ENCODE measurements at regions of chr5 and their contacts with region 1.

Region 1: GRCh38 chr5:151115274-151115905 is 34.6 kb upstream of the TNIP1 start:
- DNase-seq: peak; percentile 81
- ATAC-seq: peak; percentile 93
- H3K4me3 Mint-ChIP-seq: no peak overlapping the region
- H3K27ac Mint-ChIP-seq: no peak overlapping the region
- H3K4me1 Mint-ChIP-seq: peaks cover 6% of the 10 kb centered on the region
- H3K27me3 Mint-ChIP-seq: no peaks in the 10 kb centered on the region
- CTCF ChIP-seq: peak; percentile 97

Region 2: GRCh38 chr5:151020304-151021110 is 94.9 kb before region 1 on chr5 and contains the start of gene GPX3:
- CTCF ChIA-PET with region 1: interaction called, 16 read pairs
- POLR2A ChIA-PET with region 1: interaction called, 3 read pairs
- intact Hi-C with region 1: no loop called
- DNase-seq: peak; percentile 52
- ATAC-seq: peak; percentile 70
- H3K4me3 Mint-ChIP-seq: peak within 1 kb of the TSS; percentile 48
- H3K27ac Mint-ChIP-seq: no peak within 1 kb of the TSS
- H3K4me1 Mint-ChIP-seq: peaks cover 14% of the 10 kb centered on the region
- H3K27me3 Mint-ChIP-seq: peaks cover 7% of the 10 kb centered on the region
- CTCF ChIP-seq: no peak
- total RNA-seq, gene GPX3: not detected

Region 3: DNA sequence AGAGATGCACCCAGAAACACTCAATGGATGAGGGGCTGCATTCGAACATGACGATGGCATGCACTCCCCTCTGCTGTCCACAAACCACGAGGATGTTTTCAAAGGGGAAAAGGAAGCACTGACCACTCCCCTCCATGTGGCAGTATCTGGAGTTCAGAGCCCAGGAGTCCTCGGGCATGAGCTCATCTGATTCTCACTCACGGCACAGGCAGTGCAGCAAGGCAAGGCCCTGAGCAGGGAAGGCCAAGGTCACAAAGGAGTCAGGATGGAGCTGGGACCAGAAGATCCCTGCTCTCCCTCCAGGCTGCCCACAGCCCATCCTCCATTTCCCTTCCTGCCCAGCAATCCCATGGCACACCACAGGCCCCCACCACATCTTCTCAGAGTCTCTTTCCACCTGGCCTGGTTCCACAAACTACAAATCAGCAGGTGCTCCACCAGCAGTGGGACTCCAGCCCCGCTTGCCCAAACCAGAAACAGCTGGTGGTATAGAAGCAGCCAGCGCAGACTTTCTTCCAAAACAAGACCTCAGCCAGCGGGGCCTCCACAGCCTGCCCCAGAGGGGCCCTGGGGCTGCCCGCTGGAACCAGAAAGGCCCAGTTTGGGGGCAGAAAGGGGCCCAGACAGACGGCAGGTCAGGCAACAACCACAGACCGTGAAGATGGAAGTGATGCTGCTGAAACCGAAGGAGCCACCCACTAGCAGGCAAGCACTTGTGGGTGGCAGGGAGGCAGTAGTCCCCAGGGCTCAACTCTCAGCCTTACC is 46.8 kb before region 1 on chr5:
- CTCF ChIA-PET with region 1: interaction called, 27 read pairs
- POLR2A ChIA-PET with region 1: interaction called, 3 read pairs
- intact Hi-C with region 1: loop called (anchors 5 kb)
- DNase-seq: peak; percentile 81
- ATAC-seq: peak; percentile 80
- H3K4me3 Mint-ChIP-seq: peak overlapping the region; percentile 35
- H3K27ac Mint-ChIP-seq: peak overlapping the region; percentile 85
- H3K4me1 Mint-ChIP-seq: peaks cover 95% of the 10 kb centered on the region
- H3K27me3 Mint-ChIP-seq: no peaks in the 10 kb centered on the region
- CTCF ChIP-seq: no peak

Region 4: GRCh38 chr5:151093476-151093889 is 21.9 kb before region 1 on chr5:
- CTCF ChIA-PET with region 1: interaction called, 59 read pairs
- POLR2A ChIA-PET with region 1: interaction called, 9 read pairs
- intact Hi-C with region 1: no loop called
- DNase-seq: no peak
- ATAC-seq: peak; percentile 15
- H3K4me3 Mint-ChIP-seq: peak overlapping the region; percentile 61
- H3K27ac Mint-ChIP-seq: peak overlapping the region; percentile 93
- H3K4me1 Mint-ChIP-seq: peaks cover 68% of the 10 kb centered on the region
- H3K27me3 Mint-ChIP-seq: peaks cover 4% of the 10 kb centered on the region
- CTCF ChIP-seq: no peak

Region 5: GRCh38 chr5:151141535-151141934 is 26.1 kb after region 1 on chr5:
- CTCF ChIA-PET with region 1: interaction called, 28 read pairs
- POLR2A ChIA-PET with region 1: interaction called, 3 read pairs
- intact Hi-C with region 1: no loop called
- DNase-seq: peak; percentile 90
- ATAC-seq: peak; percentile 91
- H3K4me3 Mint-ChIP-seq: peak overlapping the region; percentile 73
- H3K27ac Mint-ChIP-seq: peak overlapping the region; percentile 86
- H3K4me1 Mint-ChIP-seq: peaks cover 88% of the 10 kb centered on the region
- H3K27me3 Mint-ChIP-seq: no peaks in the 10 kb centered on the region
- CTCF ChIP-seq: no peak

Region 6: DNA sequence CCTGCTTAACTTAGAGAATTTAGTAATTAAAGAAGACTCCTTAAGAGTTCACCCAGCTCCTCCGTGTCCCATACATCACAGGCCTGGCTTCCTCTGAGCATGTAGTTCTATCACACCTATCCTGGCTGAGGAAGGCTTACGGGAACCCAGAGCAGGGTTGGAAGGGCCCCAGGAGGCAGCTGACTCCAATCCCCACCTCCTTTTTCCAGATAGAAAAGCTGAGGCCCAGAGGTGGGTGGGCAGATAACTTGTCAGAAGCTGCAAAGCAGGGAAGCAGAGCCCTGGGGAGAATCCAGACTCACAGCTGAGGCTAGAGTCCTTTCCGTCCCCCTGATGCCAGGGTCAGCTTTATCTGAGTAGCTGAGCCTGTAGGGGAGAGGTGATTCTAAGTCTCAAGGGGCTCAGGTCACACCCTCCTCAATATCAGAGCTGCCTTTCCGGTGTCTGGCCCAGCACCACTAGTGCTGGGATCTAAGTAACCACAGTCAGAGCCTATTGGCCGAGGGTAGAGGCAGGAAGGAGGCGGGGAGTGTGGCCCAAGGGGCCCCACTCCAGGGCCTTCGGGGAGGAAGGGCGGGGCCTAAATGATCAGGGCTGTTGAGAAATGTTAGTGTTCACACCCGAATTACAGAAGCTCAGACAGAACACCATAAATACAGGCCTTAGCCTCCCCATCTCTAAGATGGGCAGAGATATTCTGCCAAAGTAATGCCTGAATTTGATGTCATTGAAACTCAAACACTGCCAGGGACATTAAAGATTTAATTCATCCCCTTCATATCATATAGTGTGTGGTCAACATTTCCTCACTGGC is 98.6 kb after region 1 on chr5:
- CTCF ChIA-PET with region 1: interaction called, 16 read pairs
- POLR2A ChIA-PET with region 1: no interaction called
- intact Hi-C with region 1: no loop called
- DNase-seq: peak; percentile 94
- ATAC-seq: peak; percentile 86
- H3K4me3 Mint-ChIP-seq: peak overlapping the region; percentile 88
- H3K27ac Mint-ChIP-seq: peak overlapping the region; percentile 99
- H3K4me1 Mint-ChIP-seq: peaks cover 75% of the 10 kb centered on the region
- H3K27me3 Mint-ChIP-seq: no peaks in the 10 kb centered on the region
- CTCF ChIP-seq: no peak

Measured in activated CD8-positive, alpha-beta T cell treated with anti-CD3 and anti-CD28 coated beads for 36 hours (primary cell).